Natural killer cell (primary cell): ENCODE measurements at regions of chr2 and their contacts with region 1.

Region 1: DNA sequence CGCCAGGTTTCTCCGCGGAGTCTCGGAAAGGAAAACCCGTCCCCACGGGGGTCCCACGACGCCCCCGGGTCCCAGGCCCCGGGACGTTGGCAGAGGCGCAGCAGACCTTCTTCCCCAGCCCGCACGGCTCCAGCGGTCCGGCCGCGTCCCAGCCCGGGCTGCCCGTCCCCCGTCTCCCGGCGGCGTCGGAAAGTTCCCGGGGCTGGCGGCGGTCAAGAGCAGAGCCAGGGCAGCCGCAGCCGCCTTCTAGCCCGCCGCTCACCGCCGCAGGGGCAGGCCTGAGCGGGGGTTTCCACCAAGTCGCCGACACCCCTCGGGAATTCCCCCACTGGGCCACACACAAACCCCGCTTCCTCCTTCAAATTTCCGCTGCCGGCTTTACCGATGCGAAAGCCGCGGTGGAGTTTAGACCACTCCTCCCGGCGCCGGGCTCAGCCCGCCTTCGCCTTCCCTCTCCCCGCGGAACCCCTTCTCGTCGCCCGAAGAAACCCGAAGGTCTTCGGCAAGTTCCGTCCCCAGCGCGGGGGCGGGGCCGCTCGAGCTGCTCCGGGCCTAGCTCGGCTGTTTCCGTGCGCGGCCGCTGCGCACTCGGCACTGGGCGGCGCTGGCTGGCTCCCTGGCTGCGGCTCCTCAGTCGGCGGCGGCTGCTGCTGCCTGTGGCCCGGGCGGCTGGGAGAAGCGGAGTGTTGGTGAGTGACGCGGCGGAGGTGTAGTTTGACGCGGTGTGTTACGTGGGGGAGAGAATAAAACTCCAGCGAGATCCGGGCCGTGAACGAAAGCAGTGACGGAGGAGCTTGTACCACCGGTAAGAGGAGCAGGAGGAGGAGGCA is at the start of gene CREB1:
- DNase-seq: peak; percentile 99 to 100
- ATAC-seq: peak; percentile 74 to 90 (median 75)
- H3K4me3 ChIP-seq: peak within 1 kb of the TSS; percentile 92
- H3K4me3 Mint-ChIP-seq: peak within 1 kb of the TSS; percentile 94
- H3K27ac ChIP-seq: peak within 1 kb of the TSS; percentile 99
- H3K27ac Mint-ChIP-seq: peak within 1 kb of the TSS; percentile 92 to 96
- H3K4me1 ChIP-seq: peaks cover 32% of the 10 kb centered on the region
- H3K4me1 Mint-ChIP-seq: peaks cover 47 to 56% of the 10 kb centered on the region in 2 donors
- H3K27me3 ChIP-seq: no peaks in the 10 kb centered on the region
- H3K27me3 Mint-ChIP-seq: no peaks in the 10 kb centered on the region
- CTCF ChIP-seq: no peak
- total RNA-seq, gene CREB1: 88.1 to 107 (median 106) TPM

Region 2: DNA sequence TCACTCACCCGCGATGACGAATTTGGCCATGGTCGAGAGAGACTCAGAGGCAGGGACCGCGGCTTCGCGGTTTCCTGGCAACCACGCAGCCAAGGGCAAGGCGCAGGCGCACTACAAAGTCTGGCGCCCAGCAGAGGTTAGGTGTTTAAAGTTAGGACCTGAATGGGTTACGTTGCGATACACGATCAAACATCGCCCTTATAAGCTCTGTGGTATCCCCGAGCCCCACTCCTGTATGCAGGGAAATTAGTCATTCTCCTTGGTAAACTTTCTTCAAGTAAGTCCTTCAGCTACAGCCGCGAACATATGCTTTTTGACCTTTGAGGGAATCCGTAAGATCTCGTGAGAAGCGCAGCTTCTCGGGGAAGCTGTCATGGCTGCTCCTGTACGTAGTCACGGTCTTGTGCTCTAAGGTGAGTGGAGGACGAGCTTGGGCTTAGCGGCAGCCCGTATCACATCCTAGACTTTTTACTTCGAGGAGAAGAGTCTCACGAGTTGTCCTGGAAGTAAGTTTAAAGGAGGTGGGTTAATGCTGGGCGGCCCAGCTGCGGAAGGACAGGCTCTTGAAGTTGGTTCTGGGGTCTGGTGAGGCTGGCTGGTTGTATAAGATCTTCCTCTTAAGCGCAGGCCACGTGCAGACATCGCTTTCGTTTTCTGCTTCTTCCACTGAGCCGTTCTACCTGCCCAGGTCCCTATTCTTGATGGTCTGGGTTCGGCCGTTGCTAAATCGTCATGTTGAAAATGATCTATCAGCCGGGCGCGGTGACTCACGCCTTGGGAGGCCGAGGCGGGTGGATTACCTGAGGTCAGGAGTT is 764.1 kb before region 1 on chr2 and contains the starts of genes FASTKD2 and MDH1B:
- intact Hi-C with region 1: loop called (anchors 1 kb)
- DNase-seq: peak; percentile 81 to 93
- ATAC-seq: peak; percentile 86 to 94 (median 87)
- H3K4me3 ChIP-seq: peak within 1 kb of the TSS; percentile 54
- H3K4me3 Mint-ChIP-seq: peak within 1 kb of the TSS; percentile 91
- H3K27ac ChIP-seq: peak within 1 kb of the TSS; percentile 86
- H3K27ac Mint-ChIP-seq: peak within 1 kb of the TSS in 1 of 2 donors; percentile 92
- H3K4me1 ChIP-seq: peaks cover 11% of the 10 kb centered on the region
- H3K4me1 Mint-ChIP-seq: peaks cover 19 to 22% of the 10 kb centered on the region in 2 donors
- H3K27me3 ChIP-seq: peaks cover 2% of the 10 kb centered on the region
- H3K27me3 Mint-ChIP-seq: peaks cover 0 to 2% of the 10 kb centered on the region in 2 donors
- CTCF ChIP-seq: no peak
- total RNA-seq, gene FASTKD2: 15.9 to 21.6 (median 17.0) TPM
- total RNA-seq, gene MDH1B: not detected

Region 3: DNA sequence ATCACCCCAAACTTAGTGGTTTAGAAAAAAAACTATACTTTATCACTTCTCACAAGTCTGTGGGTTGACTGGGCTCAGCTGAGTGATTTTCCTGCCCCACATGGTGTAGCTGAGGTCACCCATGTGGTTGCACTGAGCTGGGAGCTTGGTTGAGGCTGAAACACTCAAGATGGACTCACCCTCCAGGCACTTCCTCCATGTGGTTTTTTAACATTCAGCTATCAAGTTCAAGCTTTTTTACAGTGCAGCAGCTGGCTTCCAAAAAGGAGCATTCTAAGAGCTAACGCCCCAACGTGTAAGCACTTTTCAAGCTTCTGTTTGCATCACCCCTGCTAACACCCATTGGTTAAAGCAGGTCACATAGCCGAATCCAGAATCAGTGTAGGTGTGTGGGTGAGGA is 105.7 kb before region 1 on chr2:
- intact Hi-C with region 1: loop called (anchors 2 kb)
- DNase-seq: peak; percentile 42 to 61
- ATAC-seq: peak; percentile 87 to 100 (median 87)
- H3K4me3 ChIP-seq: no peak overlapping the region
- H3K4me3 Mint-ChIP-seq: peak overlapping the region; percentile 76
- H3K27ac ChIP-seq: peak overlapping the region; percentile 1
- H3K27ac Mint-ChIP-seq: peak overlapping the region; percentile 82 to 86
- H3K4me1 ChIP-seq: peaks cover 16% of the 10 kb centered on the region
- H3K4me1 Mint-ChIP-seq: peaks cover 36 to 39% of the 10 kb centered on the region in 2 donors
- H3K27me3 ChIP-seq: peaks cover 10% of the 10 kb centered on the region
- H3K27me3 Mint-ChIP-seq: peaks cover 36 to 40% of the 10 kb centered on the region in 2 donors
- CTCF ChIP-seq: no peak

Region 4: GRCh38 chr2:207625018-207625907 is 95.7 kb after region 1 on chr2 and contains the start of gene METTL21A:
- intact Hi-C with region 1: loop called (anchors 1 kb)
- DNase-seq: peak; percentile 91 to 98
- ATAC-seq: peak; percentile 81 to 93 (median 85)
- H3K4me3 ChIP-seq: peak within 1 kb of the TSS; percentile 87
- H3K4me3 Mint-ChIP-seq: peak within 1 kb of the TSS; percentile 95
- H3K27ac ChIP-seq: peak within 1 kb of the TSS; percentile 97
- H3K27ac Mint-ChIP-seq: peak within 1 kb of the TSS; percentile 88 to 89
- H3K4me1 ChIP-seq: peaks cover 23% of the 10 kb centered on the region
- H3K4me1 Mint-ChIP-seq: peaks cover 18 to 31% of the 10 kb centered on the region in 2 donors
- H3K27me3 ChIP-seq: no peaks in the 10 kb centered on the region
- H3K27me3 Mint-ChIP-seq: no peaks in the 10 kb centered on the region
- CTCF ChIP-seq: peak; percentile 62
- total RNA-seq, gene METTL21A: 10.1 to 11.5 (median 11.0) TPM

Region 5: DNA sequence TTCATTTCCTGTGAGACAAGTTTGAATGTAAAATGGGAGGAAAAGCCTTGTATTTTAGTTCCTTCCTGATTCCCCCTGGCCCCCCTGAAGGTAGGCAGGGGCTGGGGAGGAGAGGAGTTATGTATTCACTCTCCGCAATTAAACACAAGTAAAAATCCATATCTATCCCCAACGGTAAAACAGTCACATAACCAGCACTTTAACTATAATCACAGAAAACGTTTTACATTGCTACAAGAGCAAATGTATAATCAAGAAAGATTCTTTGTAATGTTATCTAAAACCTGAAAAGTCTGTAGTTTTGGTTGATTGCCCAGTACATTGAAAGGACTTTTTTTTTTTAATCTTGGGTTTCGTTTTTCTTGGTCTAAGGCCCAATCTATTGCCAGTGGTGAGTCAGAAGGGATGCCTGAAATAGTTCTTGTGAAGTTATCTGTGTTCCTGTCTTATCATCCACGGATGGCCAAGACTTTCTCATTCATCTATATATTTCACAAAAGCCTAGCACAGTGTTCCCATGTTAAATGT is 147.3 kb after region 1 on chr2:
- intact Hi-C with region 1: no loop called
- DNase-seq: no peak
- ATAC-seq: no peak
- H3K4me3 ChIP-seq: no peak overlapping the region
- H3K4me3 Mint-ChIP-seq: no peak overlapping the region
- H3K27ac ChIP-seq: no peak overlapping the region
- H3K27ac Mint-ChIP-seq: no peak overlapping the region
- H3K4me1 ChIP-seq: no peaks in the 10 kb centered on the region
- H3K4me1 Mint-ChIP-seq: no peaks in the 10 kb centered on the region
- H3K27me3 ChIP-seq: no peaks in the 10 kb centered on the region
- H3K27me3 Mint-ChIP-seq: peaks cover 5 to 7% of the 10 kb centered on the region in 2 donors
- CTCF ChIP-seq: no peak

Region 6: GRCh38 chr2:208265801-208266552 is 736.4 kb after region 1 on chr2 and contains the start of gene PIKFYVE:
- intact Hi-C with region 1: loop called (anchors 10 kb)
- DNase-seq: peak; percentile 81 to 93
- ATAC-seq: peak; percentile 85 to 94 (median 89)
- H3K4me3 ChIP-seq: peak within 1 kb of the TSS; percentile 60
- H3K4me3 Mint-ChIP-seq: peak within 1 kb of the TSS; percentile 93
- H3K27ac ChIP-seq: peak within 1 kb of the TSS; percentile 75
- H3K27ac Mint-ChIP-seq: peak within 1 kb of the TSS; percentile 94 to 96
- H3K4me1 ChIP-seq: peaks cover 29% of the 10 kb centered on the region
- H3K4me1 Mint-ChIP-seq: peaks cover 30 to 48% of the 10 kb centered on the region in 2 donors
- H3K27me3 ChIP-seq: no peaks in the 10 kb centered on the region
- H3K27me3 Mint-ChIP-seq: no peaks in the 10 kb centered on the region
- CTCF ChIP-seq: no peak
- total RNA-seq, gene PIKFYVE: 38.9 to 48.7 (median 39.2) TPM